CD8-positive, alpha-beta memory T cell (primary cell): ENCODE measurements at regions of chr20 and their contacts with region 1.

Region 1: DNA sequence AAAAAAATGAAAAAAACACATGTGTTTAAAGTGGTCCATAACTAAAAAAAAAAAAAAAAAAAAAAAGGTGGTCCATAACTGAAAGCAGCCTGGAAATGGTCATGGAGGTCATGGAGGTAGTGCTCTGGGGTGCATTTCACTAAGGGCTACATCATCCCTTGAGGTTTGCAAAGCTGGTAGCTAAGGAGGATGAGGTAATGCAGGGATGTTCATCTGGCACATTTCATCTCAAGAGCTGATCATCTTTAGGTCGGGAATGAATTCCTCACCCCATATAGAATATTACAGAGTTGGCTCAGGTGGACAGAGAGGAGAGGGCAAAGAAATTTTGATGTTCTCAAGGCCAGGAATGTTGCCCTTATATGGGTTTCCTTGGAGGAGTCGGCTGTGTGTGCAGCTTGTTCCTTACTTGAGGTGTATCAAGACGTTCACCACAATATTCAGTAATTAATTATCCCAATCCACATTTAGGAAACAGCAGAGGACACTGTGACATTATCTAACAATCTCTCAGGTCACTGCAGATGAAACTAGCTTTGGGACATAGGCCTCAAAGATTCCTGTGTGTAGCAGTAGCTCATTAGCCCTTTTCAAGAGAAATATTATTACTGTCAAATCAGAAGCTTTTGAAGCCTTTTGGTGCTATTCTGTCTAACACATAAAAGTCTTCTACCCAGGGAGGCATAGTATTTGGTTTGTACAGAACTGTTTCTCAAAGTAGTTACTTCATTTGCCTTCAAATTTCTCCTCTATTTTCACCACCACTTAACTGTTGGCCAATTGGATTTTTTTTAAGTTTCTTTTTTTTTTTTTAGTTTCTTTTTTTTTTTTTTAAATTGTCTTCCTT is 46.8 kb downstream of the CYP24A1 start:
- DNase-seq: no peak
- H3K4me3 ChIP-seq: no peak overlapping the region
- H3K4me3 Mint-ChIP-seq: no peak overlapping the region
- H3K27ac ChIP-seq: no peak overlapping the region
- H3K27ac Mint-ChIP-seq: peak overlapping the region in 1 of 8 donors; percentile 35
- H3K4me1 ChIP-seq: no peaks in the 10 kb centered on the region
- H3K4me1 Mint-ChIP-seq: no peaks in the 10 kb centered on the region
- H3K27me3 ChIP-seq: no peaks in the 10 kb centered on the region
- H3K27me3 Mint-ChIP-seq: peaks cover 10 to 13% of the 10 kb centered on the region in 2 donors

Region 2: GRCh38 chr20:54063992-54064676 is 62.9 kb before region 1 on chr20:
- CTCF ChIA-PET with region 1: no interaction called
- POLR2A ChIA-PET with region 1: interaction called, 14 read pairs
- DNase-seq: peak; percentile 14 to 79 (median 51)
- H3K4me3 ChIP-seq: no peak overlapping the region
- H3K4me3 Mint-ChIP-seq: peak overlapping the region in 6 of 7 donors; percentile 13 to 76 (median 61)
- H3K27ac ChIP-seq: no peak overlapping the region
- H3K27ac Mint-ChIP-seq: peak overlapping the region; percentile 14 to 88 (median 72)
- H3K4me1 ChIP-seq: no peaks in the 10 kb centered on the region
- H3K4me1 Mint-ChIP-seq: peaks cover 16 to 35% (median 24%) of the 10 kb centered on the region in 3 donors
- H3K27me3 ChIP-seq: no peaks in the 10 kb centered on the region
- H3K27me3 Mint-ChIP-seq: peaks cover 0 to 2% of the 10 kb centered on the region in 2 donors

Region 3: GRCh38 chr20:54140927-54141566 is 14.0 kb after region 1 on chr20:
- CTCF ChIA-PET with region 1: no interaction called
- POLR2A ChIA-PET with region 1: no interaction called
- DNase-seq: no peak
- H3K4me3 ChIP-seq: no peak overlapping the region
- H3K4me3 Mint-ChIP-seq: no peak overlapping the region
- H3K27ac ChIP-seq: no peak overlapping the region
- H3K27ac Mint-ChIP-seq: no peak overlapping the region
- H3K4me1 ChIP-seq: no peaks in the 10 kb centered on the region
- H3K4me1 Mint-ChIP-seq: no peaks in the 10 kb centered on the region
- H3K27me3 ChIP-seq: no peaks in the 10 kb centered on the region
- H3K27me3 Mint-ChIP-seq: peaks cover 10 to 29% of the 10 kb centered on the region in 2 donors

Region 4: DNA sequence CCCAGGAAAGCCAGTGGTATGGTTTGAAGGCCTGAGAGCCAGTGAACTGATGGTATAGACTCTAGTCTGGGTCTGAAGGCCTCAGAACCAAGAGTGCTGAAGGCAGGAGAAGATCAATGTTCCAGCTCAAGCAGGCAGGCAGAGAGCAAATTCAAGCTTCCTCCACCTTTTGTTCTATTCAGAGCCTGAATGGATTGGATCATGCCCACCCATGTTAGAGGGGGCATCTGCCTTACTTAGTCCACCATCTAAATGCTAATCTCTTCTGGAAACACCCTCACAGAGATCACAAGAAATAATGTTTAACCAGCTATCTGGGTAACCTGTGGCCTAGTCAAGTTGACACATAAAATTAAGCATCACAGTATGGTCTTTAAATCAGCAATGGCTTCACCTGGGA is 119.5 kb after region 1 on chr20:
- CTCF ChIA-PET with region 1: no interaction called
- POLR2A ChIA-PET with region 1: no interaction called
- DNase-seq: no peak
- H3K4me3 ChIP-seq: no peak overlapping the region
- H3K4me3 Mint-ChIP-seq: no peak overlapping the region
- H3K27ac ChIP-seq: no peak overlapping the region
- H3K27ac Mint-ChIP-seq: no peak overlapping the region
- H3K4me1 ChIP-seq: no peaks in the 10 kb centered on the region
- H3K4me1 Mint-ChIP-seq: no peaks in the 10 kb centered on the region
- H3K27me3 ChIP-seq: no peaks in the 10 kb centered on the region
- H3K27me3 Mint-ChIP-seq: peaks cover 0 to 4% of the 10 kb centered on the region in 2 donors

Region 5: DNA sequence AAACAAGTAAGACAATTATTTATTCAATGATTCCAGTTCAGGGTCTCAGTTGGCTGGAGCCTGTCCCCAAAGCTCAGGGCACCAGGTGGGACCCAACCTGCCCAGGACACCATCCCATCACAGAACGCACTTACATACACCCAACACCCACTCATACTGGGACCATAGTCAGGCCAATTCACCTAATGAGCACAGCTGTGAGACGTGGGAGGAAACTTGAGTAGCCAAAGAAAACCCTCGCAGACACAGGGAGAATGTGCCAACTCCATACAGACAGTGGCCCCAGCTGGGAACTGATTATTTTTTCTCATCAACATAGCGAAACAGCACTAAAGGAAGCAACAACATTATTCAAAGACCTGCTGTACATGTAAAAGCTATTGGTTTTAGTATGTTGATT is 289.7 kb after region 1 on chr20:
- CTCF ChIA-PET with region 1: no interaction called
- POLR2A ChIA-PET with region 1: no interaction called
- DNase-seq: no peak
- H3K4me3 ChIP-seq: no peak overlapping the region
- H3K4me3 Mint-ChIP-seq: no peak overlapping the region
- H3K27ac ChIP-seq: no peak overlapping the region
- H3K27ac Mint-ChIP-seq: no peak overlapping the region
- H3K4me1 ChIP-seq: no peaks in the 10 kb centered on the region
- H3K4me1 Mint-ChIP-seq: no peaks in the 10 kb centered on the region
- H3K27me3 ChIP-seq: no peaks in the 10 kb centered on the region
- H3K27me3 Mint-ChIP-seq: peaks cover 7 to 8% of the 10 kb centered on the region in 2 donors